ENCODE measurements at regions of chr3 and their contacts with region 1.

Region 1: DNA sequence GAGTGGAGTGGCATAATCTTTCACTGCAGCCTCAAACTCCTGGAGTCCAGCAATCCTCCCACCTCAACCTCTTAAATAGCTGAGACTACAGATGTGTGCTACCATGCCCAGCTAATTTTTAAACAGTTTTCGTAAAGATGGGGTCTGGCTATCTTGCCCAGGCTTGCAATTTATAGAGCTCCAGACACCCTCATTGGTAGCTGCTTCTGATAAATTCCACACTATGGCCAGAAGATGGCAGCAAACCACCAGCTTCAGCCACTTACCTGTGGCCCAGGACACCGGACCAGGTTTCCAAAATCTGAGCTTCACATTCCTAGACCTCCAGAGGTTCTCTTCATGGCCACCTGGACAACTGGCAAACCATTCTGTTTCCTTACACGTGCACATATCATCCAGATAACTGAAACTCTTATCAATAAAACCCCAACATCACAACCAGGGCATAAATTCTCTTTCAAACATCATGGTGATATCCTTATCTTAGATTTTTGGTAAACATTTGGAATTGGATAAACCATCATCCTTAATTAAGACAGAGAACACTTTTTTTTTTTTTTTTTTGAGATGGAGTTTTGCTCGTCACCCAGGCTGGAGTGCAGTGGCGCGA is 28.9 kb downstream of the FBXW12 start:
- DNase-seq: peak; percentile 41
- H3K4me3 Mint-ChIP-seq: no peak overlapping the region
- H3K27ac Mint-ChIP-seq: no peak overlapping the region
- H3K4me1 Mint-ChIP-seq: no peaks in the 10 kb centered on the region
- H3K27me3 Mint-ChIP-seq: no peaks in the 10 kb centered on the region

Region 2: GRCh38 chr3:48504051-48504946 is 103.4 kb after region 1 on chr3 and contains the start of gene SHISA5:
- intact Hi-C with region 1: no loop called
- DNase-seq: peak; percentile 51
- H3K4me3 Mint-ChIP-seq: peak within 1 kb of the TSS; percentile 76
- H3K27ac Mint-ChIP-seq: peak within 1 kb of the TSS; percentile 62
- H3K4me1 Mint-ChIP-seq: peaks cover 38% of the 10 kb centered on the region
- H3K27me3 Mint-ChIP-seq: no peaks in the 10 kb centered on the region
- total RNA-seq, gene SHISA5: 65.6 and 69.5 TPM in 2 replicates

Region 3: GRCh38 chr3:48548729-48549705 is 148.1 kb after region 1 on chr3:
- intact Hi-C with region 1: loop called (anchors 2 kb)
- DNase-seq: peak; percentile 72
- H3K4me3 Mint-ChIP-seq: no peak overlapping the region
- H3K27ac Mint-ChIP-seq: no peak overlapping the region
- H3K4me1 Mint-ChIP-seq: peaks cover 16% of the 10 kb centered on the region
- H3K27me3 Mint-ChIP-seq: no peaks in the 10 kb centered on the region

Region 4: GRCh38 chr3:48614044-48614443 is 213.1 kb after region 1 on chr3:
- intact Hi-C with region 1: no loop called
- DNase-seq: no peak
- H3K4me3 Mint-ChIP-seq: peak overlapping the region; percentile 49
- H3K27ac Mint-ChIP-seq: peak overlapping the region; percentile 95
- H3K4me1 Mint-ChIP-seq: peaks cover 13% of the 10 kb centered on the region
- H3K27me3 Mint-ChIP-seq: no peaks in the 10 kb centered on the region

Region 5: DNA sequence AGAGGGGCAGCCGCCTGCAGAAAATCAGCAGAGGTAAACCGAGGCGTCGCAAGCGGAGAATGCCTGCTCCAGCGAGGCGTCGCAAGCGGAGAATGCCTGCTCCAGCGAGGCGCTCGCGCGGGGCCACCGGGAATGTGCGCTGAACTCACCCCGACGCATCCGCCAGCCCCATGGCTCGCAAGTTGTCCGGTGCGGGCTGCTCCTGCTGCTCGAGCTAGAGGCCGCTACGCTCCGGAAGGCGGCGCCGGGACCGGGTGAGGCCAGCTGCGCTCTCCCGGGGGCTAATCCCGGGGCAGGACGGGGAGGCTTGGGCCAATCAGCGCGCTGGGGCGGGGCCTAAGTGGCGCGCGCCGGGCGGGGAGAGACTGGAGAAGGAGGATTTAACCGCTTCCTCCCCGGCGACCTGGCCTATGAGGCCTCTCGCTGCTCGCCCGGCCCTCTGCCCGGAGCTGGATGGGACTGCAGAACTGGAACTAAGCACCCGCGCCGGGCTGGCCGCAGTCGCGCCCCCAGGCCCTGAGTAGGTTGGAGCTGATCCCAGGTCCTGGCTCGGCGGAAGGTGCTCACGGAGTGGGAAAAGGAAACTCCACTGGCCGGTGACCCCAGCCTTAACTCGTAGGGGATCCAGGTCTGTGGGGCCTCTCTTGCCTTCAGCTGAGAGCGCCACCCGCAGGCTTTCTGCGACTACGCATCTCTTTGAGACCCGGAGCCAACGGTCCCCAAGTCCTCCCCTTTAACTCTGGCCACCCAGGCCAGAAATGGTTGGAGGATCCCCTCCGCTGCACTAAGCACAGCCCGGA is 234.5 kb after region 1 on chr3 and contains the start of gene SLC26A6:
- intact Hi-C with region 1: loop called (anchors 5 kb)
- DNase-seq: peak; percentile 94
- H3K4me3 Mint-ChIP-seq: peak within 1 kb of the TSS; percentile 92
- H3K27ac Mint-ChIP-seq: peak within 1 kb of the TSS; percentile 87
- H3K4me1 Mint-ChIP-seq: peaks cover 21% of the 10 kb centered on the region
- H3K27me3 Mint-ChIP-seq: no peaks in the 10 kb centered on the region
- total RNA-seq, gene SLC26A6: 85.1 and 89.6 TPM in 2 replicates

Region 6: DNA sequence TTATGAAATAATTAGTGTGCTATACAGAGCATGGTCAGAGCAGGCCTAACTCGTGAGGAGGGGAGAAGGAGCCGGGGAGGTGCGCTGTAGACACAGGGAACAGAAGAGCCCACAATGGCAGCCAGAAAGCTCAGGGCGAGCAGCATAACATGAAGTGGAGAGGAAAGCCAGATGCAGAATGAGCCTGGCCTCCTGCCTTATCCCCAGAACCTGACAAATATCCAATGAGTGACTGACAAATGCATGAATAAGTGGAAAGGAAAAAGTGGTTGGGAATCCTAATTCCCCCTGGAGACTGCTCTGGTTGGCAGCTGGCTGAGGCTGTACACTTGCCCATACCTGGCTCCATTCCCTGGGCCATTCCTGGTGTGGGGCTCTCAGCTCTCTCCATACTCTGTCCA is 1512.0 kb after region 1 on chr3:
- intact Hi-C with region 1: no loop called
- DNase-seq: no peak
- H3K4me3 Mint-ChIP-seq: no peak overlapping the region
- H3K27ac Mint-ChIP-seq: no peak overlapping the region
- H3K4me1 Mint-ChIP-seq: no peaks in the 10 kb centered on the region
- H3K27me3 Mint-ChIP-seq: no peaks in the 10 kb centered on the region

Measured in activated T-helper 2 cell treated with anti-CD3 and anti-CD28 coated beads, Interferon-gamma antibody, Interleukin-2, Interleukin-4, amounts not matched to agents 10 μg/mL and 5 μg/mL and 100 μg/mL, durations not matched to agents 14 hours and 24 hours and 36 hours (primary cell).